ENCODE measurements at regions of chr4 and their contacts with region 1.

Region 1: GRCh38 chr4:103019308-103020124 is at the start of gene SLC9B1:
- DNase-seq: peak; percentile 85 to 98
- H3K4me3 ChIP-seq: peak within 1 kb of the TSS; percentile 66 to 71
- H3K27ac ChIP-seq: peak within 1 kb of the TSS; percentile 91 to 96
- H3K4me1 ChIP-seq: peaks cover 3 to 7% of the 10 kb centered on the region in 2 donors
- H3K27me3 ChIP-seq: no peaks in the 10 kb centered on the region
- CTCF ChIP-seq: no peak
- total RNA-seq, gene SLC9B1: not detected

Region 2: DNA sequence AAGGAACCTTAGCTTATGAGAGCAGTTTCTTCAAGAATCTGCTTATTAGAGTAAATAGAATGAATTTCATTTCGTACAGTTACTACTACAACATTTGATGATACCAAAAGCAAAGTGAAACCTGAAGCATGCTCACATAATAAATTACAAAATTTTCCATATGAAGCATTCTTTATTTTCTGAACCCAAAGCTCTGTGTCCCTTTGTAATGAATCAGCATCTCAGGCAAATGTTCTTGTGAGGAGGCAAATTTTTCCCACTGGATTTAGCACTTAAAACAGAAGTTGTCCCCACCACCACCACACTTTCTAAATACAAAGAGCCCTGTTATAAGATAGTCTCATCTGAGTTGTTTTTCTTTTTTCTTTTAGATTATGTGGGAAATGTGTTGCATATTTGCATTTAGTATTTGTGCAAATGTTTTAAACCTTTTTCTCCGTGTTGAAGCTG is 589.0 kb before region 1 on chr4:
- intact Hi-C with region 1: loop called (anchors 5 kb)
- DNase-seq: no peak
- H3K4me3 ChIP-seq: peak overlapping the region; percentile 66 to 87
- H3K27ac ChIP-seq: peak overlapping the region; percentile 49 to 70
- H3K4me1 ChIP-seq: no peaks in the 10 kb centered on the region
- H3K27me3 ChIP-seq: no peaks in the 10 kb centered on the region
- CTCF ChIP-seq: no peak

Region 3: DNA sequence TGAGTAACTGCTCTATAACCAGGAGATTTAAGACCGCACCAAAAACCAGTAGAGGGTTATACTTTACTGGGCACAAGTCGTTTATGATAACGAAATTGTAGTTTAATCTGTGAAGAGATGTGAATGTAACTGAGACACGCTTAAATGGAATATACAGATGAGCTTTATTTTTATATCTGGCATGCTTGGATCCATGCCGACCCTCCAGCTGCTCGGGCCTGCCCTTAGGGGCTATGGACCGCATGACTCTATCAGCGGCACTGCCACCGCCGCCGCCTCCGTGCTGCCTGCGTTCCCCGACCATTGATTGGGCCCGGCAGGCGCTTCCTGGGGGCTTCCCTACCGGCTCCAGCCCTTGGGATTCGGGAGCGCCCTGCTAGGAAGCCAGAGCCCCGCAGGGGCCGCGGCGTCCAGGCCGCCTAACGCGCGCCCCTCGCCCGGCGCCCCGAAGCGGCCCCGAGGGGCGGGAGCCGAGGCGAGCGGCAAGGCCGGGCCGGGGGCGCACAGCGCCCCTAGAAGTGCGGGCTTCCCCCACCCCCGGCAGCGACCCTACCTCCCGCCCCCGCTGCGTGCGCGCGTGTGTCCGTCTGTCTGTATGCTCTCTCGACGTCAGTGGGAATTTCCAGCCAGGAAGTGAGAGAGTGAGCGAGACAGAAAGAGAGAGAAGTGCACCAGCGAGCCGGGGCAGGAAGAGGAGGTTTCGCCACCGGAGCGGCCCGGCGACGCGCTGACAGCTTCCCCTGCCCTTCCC is 518.6 kb before region 1 on chr4 and contains the start of gene NFKB1:
- intact Hi-C with region 1: loop called (anchors 5 kb)
- DNase-seq: peak; percentile 19 to 82
- H3K4me3 ChIP-seq: peak within 1 kb of the TSS; percentile 88 to 98
- H3K27ac ChIP-seq: peak within 1 kb of the TSS; percentile 93 to 99
- H3K4me1 ChIP-seq: peaks cover 0 to 20% of the 10 kb centered on the region in 2 donors
- H3K27me3 ChIP-seq: no peaks in the 10 kb centered on the region
- CTCF ChIP-seq: no peak
- total RNA-seq, gene NFKB1: 34.5 TPM

Region 4: DNA sequence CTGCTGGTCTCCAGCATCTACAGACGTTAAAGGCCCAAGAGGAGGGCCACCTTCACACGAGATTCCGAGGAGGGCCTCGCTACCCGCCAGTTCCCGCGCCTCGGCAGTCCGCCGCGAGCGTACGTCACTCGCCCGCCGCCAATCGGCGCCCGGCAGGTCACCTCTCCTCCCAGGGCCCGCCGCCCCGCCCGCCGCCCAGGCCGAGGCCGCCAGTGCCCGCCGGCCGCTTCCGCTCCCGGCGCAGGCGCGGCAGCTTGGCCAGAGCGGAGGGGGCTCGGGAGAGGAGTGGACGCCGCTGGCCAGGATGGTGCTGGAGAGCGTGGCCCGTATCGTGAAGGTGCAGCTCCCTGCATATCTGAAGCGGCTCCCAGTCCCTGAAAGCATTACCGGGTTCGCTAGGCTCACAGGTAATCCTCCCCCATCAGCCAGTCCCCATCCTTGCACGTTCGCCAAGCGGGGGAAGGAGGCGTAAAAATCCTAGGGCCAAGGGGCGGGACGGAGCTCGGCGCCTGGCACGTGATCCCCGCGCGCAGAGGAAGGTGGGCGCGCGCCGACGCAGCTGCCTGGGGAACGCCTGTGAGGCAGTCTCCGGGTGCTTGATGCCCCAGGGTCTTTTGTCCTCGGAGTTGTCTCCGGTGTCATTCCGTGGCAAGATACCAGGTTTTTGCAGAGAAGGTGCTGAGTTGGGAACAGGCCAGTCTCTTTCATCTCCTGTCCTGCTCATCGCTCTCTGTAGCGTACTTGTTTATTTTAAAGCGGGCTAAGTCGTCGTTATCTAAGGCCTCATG is 150.5 kb before region 1 on chr4 and contains the start of gene CISD2:
- intact Hi-C with region 1: loop called (anchors 1 kb)
- DNase-seq: peak; percentile 71 to 95
- H3K4me3 ChIP-seq: peak within 1 kb of the TSS; percentile 76 to 86
- H3K27ac ChIP-seq: peak within 1 kb of the TSS; percentile 96 to 98
- H3K4me1 ChIP-seq: peaks cover 6 to 16% of the 10 kb centered on the region in 2 donors
- H3K27me3 ChIP-seq: no peaks in the 10 kb centered on the region
- CTCF ChIP-seq: peak in 1 of 3 experiments; percentile 2
- total RNA-seq, gene CISD2: 10.4 TPM

Region 5: GRCh38 chr4:102945066-102945465 is 74.5 kb before region 1 on chr4:
- intact Hi-C with region 1: no loop called
- DNase-seq: no peak
- H3K4me3 ChIP-seq: no peak overlapping the region
- H3K27ac ChIP-seq: no peak overlapping the region
- H3K4me1 ChIP-seq: no peaks in the 10 kb centered on the region
- H3K27me3 ChIP-seq: no peaks in the 10 kb centered on the region
- CTCF ChIP-seq: no peak

Region 6: GRCh38 chr4:103036169-103036568 is 16.7 kb after region 1 on chr4:
- intact Hi-C with region 1: no loop called
- DNase-seq: no peak
- H3K4me3 ChIP-seq: no peak overlapping the region
- H3K27ac ChIP-seq: no peak overlapping the region
- H3K4me1 ChIP-seq: no peaks in the 10 kb centered on the region
- H3K27me3 ChIP-seq: no peaks in the 10 kb centered on the region
- CTCF ChIP-seq: no peak

Region 7: DNA sequence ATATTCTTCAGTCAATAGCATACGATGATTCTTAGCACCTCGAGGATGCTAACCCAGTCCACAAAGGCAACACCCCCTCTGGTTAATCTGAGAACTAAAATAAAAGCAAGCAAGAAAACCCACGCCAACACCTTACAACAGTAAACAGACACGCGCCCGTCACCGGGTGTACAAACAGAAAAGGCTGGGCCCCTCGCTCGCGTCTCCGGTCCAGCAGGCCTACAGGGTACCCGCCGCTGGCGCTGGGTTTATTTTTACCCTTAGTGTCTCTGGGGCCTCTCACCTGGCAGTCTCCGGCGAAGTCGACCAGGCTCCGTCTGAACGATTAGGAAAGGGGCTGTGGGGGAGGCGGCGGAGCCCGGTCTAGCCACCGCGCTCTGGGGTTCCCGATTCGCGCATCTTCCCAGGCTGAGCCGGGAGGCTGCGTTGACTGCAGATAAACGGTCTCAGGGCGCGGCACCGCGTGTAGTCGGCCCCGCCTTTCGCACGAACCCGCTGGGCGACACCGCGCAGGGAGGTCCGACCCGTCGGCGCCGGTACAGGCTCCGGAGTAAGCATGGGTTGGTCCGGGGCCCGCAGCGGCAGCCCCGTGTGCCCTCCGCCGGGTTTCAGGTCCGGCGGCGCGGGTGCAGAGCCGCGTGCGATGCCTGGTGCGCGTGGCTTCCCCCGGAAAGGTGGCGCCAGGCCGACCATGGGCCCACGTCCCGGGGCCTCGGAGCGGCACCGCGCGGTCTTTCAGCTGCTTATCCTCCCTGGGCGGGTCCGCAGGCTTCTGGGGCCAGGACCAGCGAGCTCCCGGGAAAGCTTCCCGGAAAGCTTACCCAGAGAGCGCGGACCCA is 56.6 kb after region 1 on chr4:
- intact Hi-C with region 1: loop called (anchors 2 kb)
- DNase-seq: peak in 1 of 2 donors; percentile 78
- H3K4me3 ChIP-seq: peak overlapping the region; percentile 58 to 85
- H3K27ac ChIP-seq: peak overlapping the region; percentile 89 to 91
- H3K4me1 ChIP-seq: peaks cover 3 to 9% of the 10 kb centered on the region in 2 donors
- H3K27me3 ChIP-seq: no peaks in the 10 kb centered on the region
- CTCF ChIP-seq: peak in 1 of 3 experiments; percentile 17

Region 8: DNA sequence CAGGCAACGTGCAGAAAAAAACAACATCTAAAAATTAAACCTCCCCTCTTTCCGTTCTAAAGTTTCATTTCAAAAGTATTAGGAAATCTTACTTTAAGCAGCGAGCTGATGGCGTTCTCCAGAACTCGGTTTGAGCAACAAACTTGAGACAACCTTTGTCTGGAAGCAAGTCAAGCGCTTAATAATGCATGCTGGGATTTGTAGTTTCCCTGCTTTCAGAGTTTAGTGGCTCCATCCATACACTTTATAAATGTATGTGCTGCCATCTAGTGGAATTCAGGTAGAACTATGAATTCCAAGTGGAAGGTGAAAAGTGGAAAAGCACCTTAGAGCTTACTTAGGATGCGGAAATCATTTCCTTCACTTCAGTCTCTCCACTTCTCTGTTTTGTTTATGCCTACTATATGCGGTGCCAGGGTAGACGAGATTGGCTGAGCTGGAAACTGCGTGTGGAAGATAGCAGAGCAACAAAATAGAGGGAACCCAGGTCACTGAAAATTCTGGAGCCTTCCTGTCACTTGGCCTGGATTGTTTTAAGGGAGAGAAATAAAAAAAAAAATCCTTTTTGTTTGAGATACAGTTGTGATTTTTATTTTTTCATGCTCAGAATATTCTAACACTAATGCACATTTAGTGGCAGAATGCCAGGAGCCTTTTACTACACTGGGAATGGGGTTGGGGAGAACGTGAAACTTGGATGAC is 80.3 kb after region 1 on chr4 and contains the start of gene BDH2:
- intact Hi-C with region 1: loop called (anchors 2 kb)
- DNase-seq: peak in 1 of 2 donors; percentile 79
- H3K4me3 ChIP-seq: peak within 1 kb of the TSS; percentile 52 to 54
- H3K27ac ChIP-seq: peak within 1 kb of the TSS; percentile 63 to 69
- H3K4me1 ChIP-seq: peaks cover 4 to 17% of the 10 kb centered on the region in 2 donors
- H3K27me3 ChIP-seq: no peaks in the 10 kb centered on the region
- CTCF ChIP-seq: peak; percentile 66 to 83 (median 73)
- total RNA-seq, gene BDH2: 13.9 TPM

Region 9: DNA sequence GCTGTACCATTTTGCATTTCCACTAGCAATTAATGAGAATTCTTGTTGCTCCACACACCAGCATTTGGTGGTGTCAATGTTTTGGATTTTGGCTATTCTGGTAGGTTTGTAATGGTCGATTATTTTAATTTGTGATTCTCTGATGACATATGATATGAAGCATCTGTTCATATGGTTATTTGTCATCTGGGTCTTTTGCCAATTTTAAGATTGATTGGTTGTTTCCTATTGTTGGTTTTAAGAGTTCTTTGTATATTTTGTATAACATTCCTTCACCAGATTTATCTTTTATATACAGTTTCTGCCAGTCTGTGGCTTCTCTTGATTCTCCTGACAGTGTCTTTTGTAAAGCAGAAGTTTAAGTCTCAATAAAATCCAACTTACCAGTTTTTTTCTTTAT is 98.7 kb after region 1 on chr4:
- intact Hi-C with region 1: no loop called
- DNase-seq: no peak
- H3K4me3 ChIP-seq: no peak overlapping the region
- H3K27ac ChIP-seq: no peak overlapping the region
- H3K4me1 ChIP-seq: no peaks in the 10 kb centered on the region
- H3K27me3 ChIP-seq: no peaks in the 10 kb centered on the region
- CTCF ChIP-seq: no peak

Region 10: GRCh38 chr4:103198111-103198765 is 178.7 kb after region 1 on chr4 and contains the start of gene CENPE:
- intact Hi-C with region 1: loop called (anchors 5 kb)
- DNase-seq: peak; percentile 36 to 91
- H3K4me3 ChIP-seq: peak within 1 kb of the TSS; percentile 61 to 99
- H3K27ac ChIP-seq: peak within 1 kb of the TSS; percentile 56 to 67
- H3K4me1 ChIP-seq: peaks cover 0 to 5% of the 10 kb centered on the region in 2 donors
- H3K27me3 ChIP-seq: no peaks in the 10 kb centered on the region
- CTCF ChIP-seq: no peak
- total RNA-seq, gene CENPE: not detected

Measured in ascending aorta (tissue), 2 donors.